Caco-2 (cell line): ENCODE measurements at regions of chr9 and their contacts with region 1.

Region 1: GRCh38 chr9:134204991-134205578 is 40.7 kb upstream of the RNU6ATAC start:
- DNase-seq: peak; percentile 46 to 64
- H3K4me3 ChIP-seq: no peak overlapping the region
- H3K4me3 Mint-ChIP-seq: no peak overlapping the region
- H3K27ac Mint-ChIP-seq: peak overlapping the region; percentile 45
- H3K4me1 ChIP-seq: peaks cover 10% of the 10 kb centered on the region
- H3K4me1 Mint-ChIP-seq: peaks cover 12% of the 10 kb centered on the region
- H3K27me3 ChIP-seq: no peaks in the 10 kb centered on the region
- H3K27me3 Mint-ChIP-seq: no peaks in the 10 kb centered on the region
- CTCF ChIP-seq: no peak

Region 2: DNA sequence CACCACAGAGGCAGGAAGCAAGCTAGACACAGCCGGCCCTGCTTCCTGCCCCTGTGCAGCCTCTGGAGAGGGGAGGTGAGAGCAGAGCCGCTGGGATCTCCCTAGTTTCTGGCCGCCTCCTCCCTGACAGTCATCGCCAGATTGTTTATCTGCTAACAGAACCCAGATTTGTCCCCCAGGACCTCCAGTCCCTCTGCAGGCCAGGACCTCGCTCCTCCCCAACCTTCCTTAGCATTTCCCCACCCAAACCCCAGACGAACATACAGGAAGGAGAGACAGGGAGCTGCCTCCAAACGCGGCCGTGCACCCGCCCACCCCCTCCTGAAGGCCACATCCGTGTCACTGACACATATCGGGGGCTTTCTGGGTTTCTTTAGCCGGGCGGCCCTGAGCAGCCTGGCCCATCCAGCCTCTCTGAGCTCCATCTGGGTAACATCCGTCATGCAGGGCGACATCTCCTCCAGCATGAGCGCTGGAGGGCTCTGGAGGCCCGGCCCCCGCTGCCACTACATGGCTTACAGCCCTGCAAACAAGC is 521.4 kb before region 1 on chr9:
- CTCF ChIA-PET with region 1: no interaction called
- POLR2A ChIA-PET with region 1: no interaction called
- intact Hi-C with region 1: no loop called
- DNase-seq: no peak
- H3K4me3 ChIP-seq: no peak overlapping the region
- H3K4me3 Mint-ChIP-seq: no peak overlapping the region
- H3K27ac Mint-ChIP-seq: no peak overlapping the region
- H3K4me1 ChIP-seq: no peaks in the 10 kb centered on the region
- H3K4me1 Mint-ChIP-seq: peaks cover 7% of the 10 kb centered on the region
- H3K27me3 ChIP-seq: no peaks in the 10 kb centered on the region
- H3K27me3 Mint-ChIP-seq: no peaks in the 10 kb centered on the region
- CTCF ChIP-seq: no peak

Region 3: GRCh38 chr9:134227451-134228411 is 22.6 kb after region 1 on chr9:
- CTCF ChIA-PET with region 1: no interaction called
- POLR2A ChIA-PET with region 1: no interaction called
- intact Hi-C with region 1: loop called (anchors 1 kb)
- DNase-seq: no peak
- H3K4me3 ChIP-seq: no peak overlapping the region
- H3K4me3 Mint-ChIP-seq: no peak overlapping the region
- H3K27ac Mint-ChIP-seq: no peak overlapping the region
- H3K4me1 ChIP-seq: no peaks in the 10 kb centered on the region
- H3K4me1 Mint-ChIP-seq: peaks cover 7% of the 10 kb centered on the region
- H3K27me3 ChIP-seq: no peaks in the 10 kb centered on the region
- H3K27me3 Mint-ChIP-seq: no peaks in the 10 kb centered on the region
- CTCF ChIP-seq: no peak

Region 4: GRCh38 chr9:134725605-134725940 is 520.5 kb after region 1 on chr9:
- CTCF ChIA-PET with region 1: no interaction called
- POLR2A ChIA-PET with region 1: no interaction called
- intact Hi-C with region 1: no loop called
- DNase-seq: no peak
- H3K4me3 ChIP-seq: no peak overlapping the region
- H3K4me3 Mint-ChIP-seq: no peak overlapping the region
- H3K27ac Mint-ChIP-seq: no peak overlapping the region
- H3K4me1 ChIP-seq: no peaks in the 10 kb centered on the region
- H3K4me1 Mint-ChIP-seq: no peaks in the 10 kb centered on the region
- H3K27me3 ChIP-seq: no peaks in the 10 kb centered on the region
- H3K27me3 Mint-ChIP-seq: peaks cover 3% of the 10 kb centered on the region
- CTCF ChIP-seq: no peak